MCF 10A (cell line): ENCODE measurements at regions of chr7 and their contacts with region 1.

Region 1: DNA sequence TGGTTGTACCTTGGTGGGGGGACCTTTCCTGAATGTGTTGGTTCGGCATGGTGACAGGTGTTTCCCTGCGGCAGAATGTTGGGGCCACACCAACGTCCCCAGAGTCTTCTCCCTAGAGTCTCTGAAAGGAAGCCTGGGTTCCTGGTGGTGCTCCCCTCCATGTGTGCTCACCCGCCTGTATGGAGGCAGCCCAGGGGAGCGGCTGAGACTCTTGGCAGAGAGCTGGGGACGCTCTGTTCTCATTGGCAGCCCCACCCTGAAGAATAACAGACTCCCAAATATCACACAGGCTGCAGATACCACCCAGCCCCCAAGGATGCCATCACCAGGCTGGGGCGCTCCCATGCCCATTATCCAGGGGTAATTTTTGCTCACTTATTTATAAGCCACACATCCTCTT is 34.8 kb downstream of the CHST12 start:
- DNase-seq: peak; percentile 22
- H3K4me3 Mint-ChIP-seq: peak overlapping the region; percentile 28
- H3K27ac Mint-ChIP-seq: peak overlapping the region; percentile 7
- H3K4me1 Mint-ChIP-seq: peaks cover 22% of the 10 kb centered on the region
- H3K27me3 Mint-ChIP-seq: no peaks in the 10 kb centered on the region
- CTCF ChIP-seq: no peak

Region 2: GRCh38 chr7:2299131-2299829 is 138.9 kb before region 1 on chr7:
- CTCF ChIA-PET with region 1: no interaction called
- POLR2A ChIA-PET with region 1: no interaction called
- intact Hi-C with region 1: no loop called
- DNase-seq: no peak
- H3K4me3 Mint-ChIP-seq: no peak overlapping the region
- H3K27ac Mint-ChIP-seq: no peak overlapping the region
- H3K4me1 Mint-ChIP-seq: no peaks in the 10 kb centered on the region
- H3K27me3 Mint-ChIP-seq: no peaks in the 10 kb centered on the region
- CTCF ChIP-seq: no peak

Region 3: GRCh38 chr7:2403014-2403717 is 35.0 kb before region 1 on chr7 and contains the start of gene CHST12:
- CTCF ChIA-PET with region 1: no interaction called
- POLR2A ChIA-PET with region 1: no interaction called
- intact Hi-C with region 1: loop called (anchors 2 kb)
- DNase-seq: peak; percentile 90
- H3K4me3 Mint-ChIP-seq: peak within 1 kb of the TSS; percentile 77
- H3K27ac Mint-ChIP-seq: peak within 1 kb of the TSS; percentile 39
- H3K4me1 Mint-ChIP-seq: peaks cover 37% of the 10 kb centered on the region
- H3K27me3 Mint-ChIP-seq: no peaks in the 10 kb centered on the region
- CTCF ChIP-seq: no peak
- total RNA-seq, gene CHST12: 9.8 and 9.9 TPM in 2 replicates

Region 4: GRCh38 chr7:2420216-2420933 is 17.8 kb before region 1 on chr7:
- CTCF ChIA-PET with region 1: no interaction called
- POLR2A ChIA-PET with region 1: no interaction called
- intact Hi-C with region 1: no loop called
- DNase-seq: no peak
- H3K4me3 Mint-ChIP-seq: no peak overlapping the region
- H3K27ac Mint-ChIP-seq: no peak overlapping the region
- H3K4me1 Mint-ChIP-seq: no peaks in the 10 kb centered on the region
- H3K27me3 Mint-ChIP-seq: no peaks in the 10 kb centered on the region
- CTCF ChIP-seq: no peak